Calu3 (cell line): ENCODE measurements at regions of chr20 and their contacts with region 1.

Region 1: DNA sequence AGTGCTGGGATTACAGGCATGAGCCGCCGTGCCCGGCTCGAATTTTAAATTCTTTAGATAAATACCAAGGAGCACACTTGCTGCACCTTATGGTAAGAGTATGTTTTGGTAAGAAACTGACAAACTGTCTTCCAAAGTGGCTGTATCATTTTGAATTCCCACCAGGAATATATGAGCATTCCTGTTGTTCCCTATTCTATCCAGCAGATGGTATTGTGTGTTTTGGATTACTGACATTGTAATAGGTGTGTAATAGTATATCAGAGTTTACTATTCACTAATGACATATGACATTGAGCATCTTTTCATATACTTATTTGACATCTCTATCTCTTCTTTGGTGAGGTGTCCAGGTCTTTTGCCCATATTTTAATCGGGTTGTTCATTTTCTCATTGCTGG is 40.5 kb downstream of the TGM6 start:
- DNase-seq: no peak
- H3K4me3 Mint-ChIP-seq: no peak overlapping the region
- H3K27ac Mint-ChIP-seq: no peak overlapping the region
- H3K4me1 Mint-ChIP-seq: no peaks in the 10 kb centered on the region
- H3K27me3 Mint-ChIP-seq: peaks cover 67% of the 10 kb centered on the region
- CTCF ChIP-seq: no peak

Region 2: GRCh38 chr20:2451939-2452732 is 30.9 kb after region 1 on chr20:
- CTCF ChIA-PET with region 1: no interaction called
- intact Hi-C with region 1: loop called (anchors 2 kb)
- DNase-seq: peak; percentile 79
- H3K4me3 Mint-ChIP-seq: no peak overlapping the region
- H3K27ac Mint-ChIP-seq: no peak overlapping the region
- H3K4me1 Mint-ChIP-seq: no peaks in the 10 kb centered on the region
- H3K27me3 Mint-ChIP-seq: peaks cover 26% of the 10 kb centered on the region
- CTCF ChIP-seq: peak; percentile 61